Activated CD4-positive, alpha-beta T cell treated with anti-CD3 and anti-CD28 coated beads for 36 hours (primary cell): ENCODE measurements at regions of chr2 and their contacts with region 1.

Region 1: GRCh38 chr2:70086838-70087701 is at the start of gene PCBP1:
- DNase-seq: peak; percentile 98
- ATAC-seq: peak; percentile 37
- H3K4me3 Mint-ChIP-seq: peak within 1 kb of the TSS; percentile 100
- H3K27ac Mint-ChIP-seq: peak within 1 kb of the TSS; percentile 100
- H3K4me1 Mint-ChIP-seq: peaks cover 52% of the 10 kb centered on the region
- H3K27me3 Mint-ChIP-seq: no peaks in the 10 kb centered on the region
- total RNA-seq, gene PCBP1: 417 to 450 TPM

Region 2: DNA sequence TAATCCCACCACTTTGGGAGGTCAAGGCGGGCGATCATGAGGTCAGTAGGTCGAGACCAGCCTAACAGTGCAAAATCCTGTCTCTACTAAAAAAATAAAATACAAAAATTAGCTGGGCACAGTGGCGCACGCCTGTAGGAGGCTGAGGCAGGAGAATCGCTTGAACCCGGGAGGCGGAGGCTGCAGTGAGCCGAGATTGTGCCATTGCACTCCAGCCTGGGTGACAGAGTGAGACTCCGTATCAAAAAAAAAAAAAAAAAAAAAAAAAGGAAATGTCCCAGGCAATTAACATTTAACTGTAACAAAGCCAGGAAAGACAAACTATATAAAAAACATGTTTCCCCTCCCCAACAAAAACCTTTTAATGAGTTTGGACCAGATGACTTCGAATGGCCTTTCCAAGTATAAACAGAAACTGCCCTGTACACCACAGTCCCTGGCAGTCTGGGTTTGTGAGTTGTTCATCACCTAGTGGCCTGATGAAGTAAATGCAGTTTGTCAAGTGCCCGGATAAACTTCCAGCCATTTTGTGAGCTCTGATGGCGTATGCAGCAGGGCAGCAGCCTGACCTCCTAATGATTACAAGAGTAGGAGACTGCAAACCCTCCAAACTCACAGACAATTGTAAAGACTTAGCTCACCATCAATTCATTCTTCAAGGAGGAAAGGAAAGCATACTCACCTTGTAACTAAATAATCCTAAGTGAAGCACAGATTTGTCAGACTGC is 16.4 kb before region 1 on chr2:
- CTCF ChIA-PET with region 1: interaction called, 94 read pairs
- POLR2A ChIA-PET with region 1: interaction called, 13 read pairs
- intact Hi-C with region 1: loop called (anchors 1 kb)
- DNase-seq: peak; percentile 73
- ATAC-seq: peak; percentile 60
- H3K4me3 Mint-ChIP-seq: peak overlapping the region; percentile 48
- H3K27ac Mint-ChIP-seq: peak overlapping the region; percentile 94
- H3K4me1 Mint-ChIP-seq: peaks cover 51% of the 10 kb centered on the region
- H3K27me3 Mint-ChIP-seq: no peaks in the 10 kb centered on the region

Region 3: GRCh38 chr2:70124983-70125480 is 38.0 kb after region 1 on chr2:
- CTCF ChIA-PET with region 1: interaction called, 9 read pairs
- POLR2A ChIA-PET with region 1: interaction called, 19 read pairs
- intact Hi-C with region 1: loop called (anchors 1 to 2 kb)
- DNase-seq: peak; percentile 74
- ATAC-seq: peak; percentile 53
- H3K4me3 Mint-ChIP-seq: peak overlapping the region; percentile 92
- H3K27ac Mint-ChIP-seq: peak overlapping the region; percentile 100
- H3K4me1 Mint-ChIP-seq: peaks cover 72% of the 10 kb centered on the region
- H3K27me3 Mint-ChIP-seq: no peaks in the 10 kb centered on the region

Region 4: DNA sequence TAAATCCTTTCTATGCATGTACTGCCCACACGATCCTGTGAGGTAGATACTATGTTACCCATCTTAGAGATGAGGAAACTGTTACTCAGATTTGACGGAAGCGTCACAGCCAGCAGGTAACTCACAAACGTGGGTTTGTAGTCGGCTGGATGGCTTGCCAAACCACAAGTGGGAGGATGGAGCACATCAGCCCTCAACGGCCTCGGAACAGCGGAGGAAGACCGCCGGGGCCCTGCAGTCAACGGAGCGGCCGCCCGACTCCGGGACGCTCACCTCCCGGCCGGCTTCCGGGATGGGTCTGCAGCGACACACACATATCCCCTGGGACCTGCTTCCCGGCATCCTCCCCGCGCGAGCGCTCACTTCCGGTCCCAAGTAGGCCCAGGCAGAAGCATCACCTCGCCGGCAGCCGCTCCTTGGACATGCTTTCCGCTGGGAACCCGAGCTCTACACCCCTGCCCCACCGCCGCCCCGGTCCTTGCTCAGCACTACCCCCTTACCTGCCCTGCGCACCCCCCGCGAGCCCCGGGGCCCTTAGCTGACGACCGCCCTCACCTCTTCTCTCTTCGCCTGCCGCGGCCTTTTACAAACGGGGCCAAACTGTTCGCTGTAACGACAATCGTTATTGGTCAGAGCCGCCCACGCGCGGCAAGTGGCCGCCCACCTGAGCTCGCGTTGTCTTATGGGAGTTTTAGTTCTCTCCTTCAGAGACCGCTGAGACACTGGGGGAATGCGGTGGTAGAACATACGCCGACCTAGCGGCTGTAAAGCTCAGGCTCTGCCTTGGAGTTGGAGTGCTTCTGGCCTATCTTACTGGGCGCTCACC is 103.6 kb after region 1 on chr2 and contains the start of gene C2orf42:
- CTCF ChIA-PET with region 1: interaction called, 7 read pairs
- POLR2A ChIA-PET with region 1: interaction called, 3 read pairs
- intact Hi-C with region 1: loop called (anchors 1 kb)
- DNase-seq: peak; percentile 98
- ATAC-seq: peak; percentile 91
- H3K4me3 Mint-ChIP-seq: peak within 1 kb of the TSS; percentile 84
- H3K27ac Mint-ChIP-seq: peak within 1 kb of the TSS; percentile 97
- H3K4me1 Mint-ChIP-seq: peaks cover 16% of the 10 kb centered on the region
- H3K27me3 Mint-ChIP-seq: no peaks in the 10 kb centered on the region
- total RNA-seq, gene C2orf42: 22.6 to 23.3 TPM

Region 5: GRCh38 chr2:70664525-70664924 is 577.5 kb after region 1 on chr2:
- CTCF ChIA-PET with region 1: no interaction called
- POLR2A ChIA-PET with region 1: no interaction called
- intact Hi-C with region 1: no loop called
- DNase-seq: peak; percentile 37
- ATAC-seq: peak; percentile 73
- H3K4me3 Mint-ChIP-seq: no peak overlapping the region
- H3K27ac Mint-ChIP-seq: peak overlapping the region; percentile 7
- H3K4me1 Mint-ChIP-seq: peaks cover 20% of the 10 kb centered on the region
- H3K27me3 Mint-ChIP-seq: no peaks in the 10 kb centered on the region